B cell (primary cell): ENCODE measurements at regions of chr4 and their contacts with region 1.

Region 1: DNA sequence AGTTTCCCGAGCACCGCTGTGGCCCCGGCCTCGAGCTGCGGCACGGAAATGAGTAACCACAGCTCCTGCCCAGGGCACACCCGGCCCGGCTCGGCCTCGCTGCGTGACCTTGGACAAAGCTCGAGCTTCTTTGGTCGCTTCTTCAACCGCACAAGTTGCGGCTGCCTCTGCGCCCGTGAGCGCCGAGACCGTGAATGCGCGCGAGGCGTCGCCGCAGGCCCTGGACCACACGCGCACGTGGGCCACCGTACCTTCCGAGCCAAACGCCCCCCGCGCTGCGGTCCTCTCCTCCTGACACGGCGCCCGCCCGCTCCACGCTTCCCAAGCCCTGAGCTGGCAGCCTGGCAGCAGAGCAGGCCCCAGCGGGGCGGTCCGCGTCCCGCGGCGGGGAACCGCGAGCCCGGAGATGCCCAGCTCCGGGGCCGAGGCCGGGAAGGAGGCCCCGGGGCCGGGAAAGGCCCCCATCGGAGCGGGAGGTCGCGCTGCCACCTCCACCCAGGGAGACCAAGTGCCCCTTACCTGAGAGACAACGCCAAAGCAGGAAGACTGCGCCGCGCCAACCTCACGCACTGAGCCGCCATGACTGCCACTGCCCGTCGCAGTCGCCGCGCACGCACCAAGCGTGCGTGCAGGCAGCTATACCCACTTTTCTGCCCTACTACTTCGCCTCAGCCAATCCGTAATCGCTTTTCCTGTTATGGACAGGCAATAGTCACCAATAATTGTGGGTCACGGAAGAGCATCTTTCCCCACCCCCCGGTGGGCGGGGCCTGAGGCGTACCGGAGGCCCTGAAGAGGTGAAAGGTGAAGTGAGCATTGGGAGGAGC is at the start of gene GRPEL1:
- DNase-seq: peak; percentile 100
- ATAC-seq: peak; percentile 91
- H3K4me3 ChIP-seq: peak within 1 kb of the TSS; percentile 73 to 90 (median 80)
- H3K4me3 Mint-ChIP-seq: peak within 1 kb of the TSS; percentile 94
- H3K27ac ChIP-seq: peak within 1 kb of the TSS; percentile 73 to 75
- H3K27ac Mint-ChIP-seq: peak within 1 kb of the TSS; percentile 94
- H3K4me1 ChIP-seq: peaks cover 26 to 37% of the 10 kb centered on the region in 2 donors
- H3K4me1 Mint-ChIP-seq: peaks cover 44% of the 10 kb centered on the region
- H3K27me3 ChIP-seq: peaks cover 0 to 3% (median 1%) of the 10 kb centered on the region in 4 experiments
- H3K27me3 Mint-ChIP-seq: peaks cover 3% of the 10 kb centered on the region
- CTCF ChIP-seq: no peak
- total RNA-seq, gene GRPEL1: 19.6 and 26.0 TPM in 2 replicates

Region 2: DNA sequence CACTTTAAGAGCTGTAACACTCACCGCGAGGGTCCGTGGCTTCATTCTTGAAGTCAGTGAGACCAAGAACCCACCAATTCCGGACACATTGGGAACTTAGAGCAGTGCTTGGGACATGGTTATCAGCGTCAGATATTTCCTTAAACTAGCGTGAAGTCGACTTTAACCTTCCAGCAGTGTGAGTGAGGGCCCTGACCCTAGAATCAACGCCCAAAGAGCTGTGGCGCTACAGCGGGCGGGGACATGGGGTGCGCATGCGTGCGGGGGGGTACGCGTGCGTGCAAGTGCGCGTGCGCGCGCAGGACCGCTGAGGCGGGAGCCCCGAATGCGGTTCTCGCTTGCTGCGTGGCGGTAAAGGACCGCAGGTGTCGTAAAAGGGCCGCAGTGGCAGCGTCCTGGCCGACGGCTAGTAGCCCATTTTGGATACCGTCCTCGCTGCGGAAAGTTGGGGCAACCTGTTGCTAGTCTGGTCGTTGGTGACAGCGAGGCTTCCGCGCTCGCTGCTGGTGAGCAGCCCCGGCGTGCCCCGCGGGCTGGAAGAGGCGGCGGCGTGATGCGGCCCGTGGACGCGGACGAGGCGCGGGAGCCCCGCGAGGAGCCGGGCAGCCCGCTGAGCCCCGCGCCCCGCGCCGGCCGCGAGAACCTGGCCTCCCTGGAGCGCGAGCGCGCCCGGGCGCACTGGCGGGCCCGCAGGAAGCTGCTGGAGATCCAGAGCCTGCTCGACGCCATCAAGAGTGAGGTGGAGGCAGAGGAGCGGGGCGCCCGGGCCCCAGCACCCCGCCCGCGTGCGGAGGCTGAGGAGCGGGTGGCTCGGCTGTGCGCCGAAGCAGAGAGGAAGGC is 393.8 kb before region 1 on chr4:
- CTCF ChIA-PET with region 1: interaction called, 3 read pairs
- POLR2A ChIA-PET with region 1: no interaction called
- intact Hi-C with region 1: loop called (anchors 1 kb)
- DNase-seq: peak; percentile 97
- ATAC-seq: peak; percentile 89
- H3K4me3 ChIP-seq: peak overlapping the region; percentile 22 to 82 (median 63)
- H3K4me3 Mint-ChIP-seq: peak overlapping the region; percentile 91
- H3K27ac ChIP-seq: peak overlapping the region; percentile 67 to 71
- H3K27ac Mint-ChIP-seq: peak overlapping the region; percentile 99
- H3K4me1 ChIP-seq: peaks cover 27 to 35% of the 10 kb centered on the region in 2 donors
- H3K4me1 Mint-ChIP-seq: peaks cover 43% of the 10 kb centered on the region
- H3K27me3 ChIP-seq: no peaks in the 10 kb centered on the region
- H3K27me3 Mint-ChIP-seq: no peaks in the 10 kb centered on the region
- CTCF ChIP-seq: no peak

Region 3: DNA sequence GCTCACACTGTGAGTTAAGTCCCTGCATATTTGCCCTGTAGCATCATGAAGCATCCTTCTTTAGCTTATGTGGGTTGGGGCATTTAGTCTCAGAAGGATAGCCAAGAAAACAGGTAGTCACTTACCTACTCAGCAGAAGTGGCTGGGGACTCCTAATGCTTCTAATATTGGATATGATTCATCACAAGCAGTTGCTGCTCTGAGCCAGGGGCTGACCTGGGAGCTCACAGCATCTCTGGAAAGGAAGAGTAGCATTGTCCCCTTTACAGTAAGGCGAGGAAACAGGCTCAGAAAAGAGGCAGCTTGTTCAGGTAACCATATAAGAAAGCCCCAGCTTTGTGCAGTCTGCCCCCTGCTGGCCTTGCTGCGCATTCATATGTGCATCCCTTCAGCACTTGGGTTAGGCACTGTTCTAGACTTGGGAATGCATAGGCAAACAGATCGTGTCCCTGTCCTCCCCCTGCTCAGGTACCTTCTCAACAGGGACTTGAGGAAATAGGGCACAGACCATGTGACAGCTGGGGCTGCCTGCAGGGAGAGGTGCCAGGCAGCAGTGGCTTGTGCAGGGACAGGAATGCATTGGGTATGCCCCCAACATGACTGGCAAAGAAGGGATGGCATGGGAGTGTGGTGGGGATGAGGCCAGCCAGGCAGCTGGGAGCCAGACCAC is 193.7 kb before region 1 on chr4:
- CTCF ChIA-PET with region 1: interaction called, 18 read pairs
- POLR2A ChIA-PET with region 1: no interaction called
- intact Hi-C with region 1: no loop called
- DNase-seq: peak; percentile 72
- ATAC-seq: peak; percentile 50
- H3K4me3 ChIP-seq: no peak overlapping the region
- H3K4me3 Mint-ChIP-seq: no peak overlapping the region
- H3K27ac ChIP-seq: no peak overlapping the region
- H3K27ac Mint-ChIP-seq: peak overlapping the region; percentile 53
- H3K4me1 ChIP-seq: peaks cover 10 to 14% of the 10 kb centered on the region in 2 donors
- H3K4me1 Mint-ChIP-seq: peaks cover 12% of the 10 kb centered on the region
- H3K27me3 ChIP-seq: no peaks in the 10 kb centered on the region
- H3K27me3 Mint-ChIP-seq: no peaks in the 10 kb centered on the region
- CTCF ChIP-seq: peak; percentile 82

Region 4: DNA sequence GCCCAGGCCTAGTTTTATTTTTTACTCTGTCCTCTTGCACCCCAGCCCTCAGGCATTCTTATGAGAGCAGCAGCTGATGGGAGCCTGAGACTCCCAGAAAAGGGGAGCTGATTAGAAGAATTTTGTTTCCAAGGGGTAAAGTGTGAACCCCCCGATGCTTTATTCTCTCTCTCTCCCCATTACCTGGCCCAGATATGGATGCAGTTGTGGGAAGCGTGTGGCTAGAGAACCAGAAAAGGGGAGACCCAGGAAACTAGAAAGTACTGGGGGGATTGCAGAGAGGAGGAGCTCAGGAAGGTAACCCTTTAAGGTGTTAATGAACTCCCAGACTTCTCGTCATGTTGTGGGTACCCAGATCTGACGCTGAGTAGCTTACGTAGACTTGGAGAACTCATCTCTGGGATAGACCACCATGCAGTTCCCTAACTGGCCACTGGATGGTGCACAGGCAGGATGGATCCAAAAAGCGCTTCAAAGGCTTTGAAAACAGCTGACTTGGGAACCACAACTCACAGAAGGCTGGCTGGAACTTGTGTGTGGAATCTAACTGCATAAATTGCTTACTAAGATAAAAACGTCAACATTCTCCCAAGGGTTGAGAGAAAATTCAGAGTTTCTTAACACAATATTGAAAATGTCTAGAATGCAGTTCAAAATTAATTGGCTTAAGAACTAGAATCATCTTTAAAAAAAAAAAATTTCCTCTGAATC is 93.4 kb before region 1 on chr4:
- CTCF ChIA-PET with region 1: interaction called, 97 read pairs
- POLR2A ChIA-PET with region 1: no interaction called
- intact Hi-C with region 1: loop called (anchors 1 kb)
- DNase-seq: peak; percentile 84
- ATAC-seq: peak; percentile 90
- H3K4me3 ChIP-seq: no peak overlapping the region
- H3K4me3 Mint-ChIP-seq: no peak overlapping the region
- H3K27ac ChIP-seq: no peak overlapping the region
- H3K27ac Mint-ChIP-seq: no peak overlapping the region
- H3K4me1 ChIP-seq: peaks cover 31 to 35% of the 10 kb centered on the region in 2 donors
- H3K4me1 Mint-ChIP-seq: peaks cover 33% of the 10 kb centered on the region
- H3K27me3 ChIP-seq: no peaks in the 10 kb centered on the region
- H3K27me3 Mint-ChIP-seq: no peaks in the 10 kb centered on the region
- CTCF ChIP-seq: peak; percentile 96

Region 5: DNA sequence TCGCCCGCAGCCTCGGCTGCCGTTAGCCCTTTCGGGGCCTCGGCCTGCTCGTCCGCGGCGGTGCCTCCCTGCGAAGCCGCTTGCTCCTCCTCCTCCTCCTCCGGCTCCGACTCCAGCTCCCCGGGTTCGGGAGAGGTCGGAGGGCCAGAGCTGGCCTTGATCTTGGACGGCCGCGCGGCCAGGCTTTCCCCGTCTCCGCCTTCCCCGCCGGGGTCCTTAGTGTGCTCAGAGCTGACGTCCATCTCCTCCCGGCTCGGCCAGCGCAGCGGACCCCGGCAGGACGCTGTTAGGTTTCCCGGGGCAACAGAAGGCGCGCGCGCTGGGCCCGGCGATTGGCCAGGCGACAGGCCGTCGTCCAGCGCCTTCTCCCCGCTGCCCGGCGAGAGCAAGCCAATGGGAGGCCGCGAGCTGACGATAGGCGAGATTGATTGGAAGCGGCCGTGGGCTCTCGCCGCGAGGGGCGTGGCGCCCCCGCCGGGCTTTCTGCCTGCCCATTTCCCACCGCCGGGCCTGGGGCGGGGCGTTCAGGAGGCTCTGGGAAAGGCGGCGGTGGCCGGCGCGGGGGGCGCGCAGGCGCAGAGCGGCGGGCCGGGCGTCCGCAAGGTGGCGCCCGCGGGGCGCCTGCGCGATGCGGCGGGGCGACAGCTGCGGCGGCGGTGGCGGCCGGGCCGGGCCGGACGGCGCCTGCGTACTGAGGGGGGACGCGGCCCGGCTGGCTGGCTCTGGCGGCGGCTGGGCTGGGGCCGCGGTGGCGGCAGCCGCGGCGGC is 24.8 kb before region 1 on chr4 and contains the start of gene TADA2B:
- CTCF ChIA-PET with region 1: interaction called, 164 read pairs
- POLR2A ChIA-PET with region 1: interaction called, 36 read pairs
- intact Hi-C with region 1: loop called (anchors 1 kb)
- DNase-seq: peak; percentile 95
- ATAC-seq: peak; percentile 87
- H3K4me3 ChIP-seq: peak within 1 kb of the TSS; percentile 51 to 96 (median 95)
- H3K4me3 Mint-ChIP-seq: peak within 1 kb of the TSS; percentile 97
- H3K27ac ChIP-seq: peak within 1 kb of the TSS; percentile 68 to 85
- H3K27ac Mint-ChIP-seq: peak within 1 kb of the TSS; percentile 92
- H3K4me1 ChIP-seq: peaks cover 31 to 48% of the 10 kb centered on the region in 2 donors
- H3K4me1 Mint-ChIP-seq: peaks cover 50% of the 10 kb centered on the region
- H3K27me3 ChIP-seq: no peaks in the 10 kb centered on the region
- H3K27me3 Mint-ChIP-seq: no peaks in the 10 kb centered on the region
- CTCF ChIP-seq: peak; percentile 27
- total RNA-seq, gene TADA2B: 38.5 and 41.5 TPM in 2 replicates